Activated naive CD4-positive, alpha-beta T cell treated with anti-CD3 and anti-CD28 coated beads for 36 hours (primary cell): ENCODE measurements at regions of chr20 and their contacts with region 1.

Region 1: DNA sequence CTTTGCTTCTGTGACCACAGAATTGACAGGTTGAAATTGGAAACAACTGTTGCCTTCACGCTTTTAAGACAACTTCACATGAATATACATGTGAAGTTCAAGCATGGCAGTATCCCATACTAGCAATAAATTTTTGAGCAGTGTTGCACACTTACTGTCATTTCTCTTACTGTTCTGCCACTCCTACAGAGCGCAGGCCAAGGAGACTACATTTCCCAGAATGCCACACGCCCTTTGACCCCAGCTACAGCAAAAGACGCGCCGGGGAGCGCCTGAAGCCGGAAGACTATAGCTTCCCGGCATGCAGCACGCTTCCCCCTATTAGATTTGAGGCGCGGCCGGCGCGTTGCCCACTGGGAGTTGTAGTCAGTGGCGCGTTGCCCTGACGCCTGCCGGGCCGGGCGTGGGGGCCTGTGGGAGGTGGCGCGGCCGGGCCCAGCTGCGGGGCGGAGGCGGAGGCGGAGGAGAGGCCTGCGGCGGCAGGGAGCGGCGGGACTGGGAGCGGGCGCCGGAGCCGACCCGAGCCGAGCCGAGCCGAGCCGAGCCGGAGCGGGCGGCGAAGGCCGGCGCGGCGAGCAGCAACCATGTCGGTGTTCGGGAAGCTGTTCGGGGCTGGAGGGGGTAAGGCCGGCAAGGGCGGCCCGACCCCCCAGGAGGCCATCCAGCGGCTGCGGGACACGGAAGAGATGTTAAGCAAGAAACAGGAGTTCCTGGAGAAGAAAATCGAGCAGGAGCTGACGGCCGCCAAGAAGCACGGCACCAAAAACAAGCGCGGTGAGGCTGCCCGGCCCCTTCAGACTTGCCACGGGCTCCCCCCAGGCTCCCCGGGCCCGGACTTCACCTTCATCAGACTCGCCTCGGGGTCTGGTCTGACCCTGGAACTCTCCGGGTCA is at the start of gene CHMP4B:
- DNase-seq: peak; percentile 99
- H3K4me3 Mint-ChIP-seq: peak within 1 kb of the TSS; percentile 87
- H3K27ac Mint-ChIP-seq: peak within 1 kb of the TSS; percentile 87
- H3K4me1 Mint-ChIP-seq: peaks cover 42% of the 10 kb centered on the region
- H3K27me3 Mint-ChIP-seq: no peaks in the 10 kb centered on the region
- total RNA-seq, gene CHMP4B: 68.9 to 69.7 TPM

Region 2: DNA sequence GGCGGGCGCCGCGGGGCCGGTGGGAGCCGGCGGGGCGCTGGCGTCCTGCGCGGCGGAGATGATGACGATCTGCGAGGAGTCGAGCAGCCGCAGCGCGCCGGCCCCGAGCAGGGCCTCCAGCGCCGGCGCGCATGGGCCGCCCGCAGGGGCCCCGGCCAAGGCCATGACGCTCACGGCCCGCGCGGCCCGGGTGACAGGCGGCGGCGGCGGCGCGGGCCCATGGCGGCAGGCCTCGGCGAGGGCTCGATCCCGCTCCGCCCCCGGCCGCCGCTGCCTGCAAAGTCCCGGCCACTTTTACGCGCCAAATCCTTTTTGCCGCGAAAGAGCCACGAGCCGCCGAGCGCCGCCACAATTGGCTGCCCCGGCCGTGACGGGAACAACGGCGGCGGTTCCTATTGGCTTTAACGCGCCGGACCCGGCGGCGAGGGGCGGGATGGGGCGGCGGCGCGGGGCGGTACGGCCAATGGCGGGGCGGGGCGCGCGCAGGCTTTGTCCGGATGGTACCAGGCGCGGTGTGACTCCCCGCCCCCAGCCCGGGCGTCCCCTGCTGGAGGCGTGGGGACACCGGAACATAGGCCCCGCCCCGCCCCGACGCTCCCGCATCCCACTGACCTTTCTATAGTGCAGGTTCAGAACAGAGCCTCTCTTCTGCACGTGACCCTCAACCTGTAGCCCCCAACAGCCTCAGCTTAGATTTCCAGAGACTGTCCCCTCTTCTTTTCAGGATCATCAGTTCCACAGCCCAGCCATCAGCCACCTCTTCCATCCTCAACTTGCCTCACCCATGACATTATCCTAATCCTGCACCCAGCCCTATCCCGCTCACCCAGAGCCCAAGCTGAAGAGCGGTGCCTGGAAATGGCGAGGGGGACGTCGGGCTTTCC is 124.8 kb before region 1 on chr20 and contains the start of gene E2F1:
- CTCF ChIA-PET with region 1: no interaction called
- intact Hi-C with region 1: loop called (anchors 1 kb)
- DNase-seq: peak; percentile 97
- H3K4me3 Mint-ChIP-seq: peak within 1 kb of the TSS; percentile 87
- H3K27ac Mint-ChIP-seq: peak within 1 kb of the TSS; percentile 88
- H3K4me1 Mint-ChIP-seq: peaks cover 62% of the 10 kb centered on the region
- H3K27me3 Mint-ChIP-seq: no peaks in the 10 kb centered on the region
- total RNA-seq, gene E2F1: 69.3 to 70.0 TPM

Region 3: GRCh38 chr20:33777816-33778215 is 33.3 kb before region 1 on chr20:
- CTCF ChIA-PET with region 1: no interaction called
- intact Hi-C with region 1: loop called (anchors 1 kb)
- DNase-seq: no peak
- H3K4me3 Mint-ChIP-seq: no peak overlapping the region
- H3K27ac Mint-ChIP-seq: no peak overlapping the region
- H3K4me1 Mint-ChIP-seq: peaks cover 15% of the 10 kb centered on the region
- H3K27me3 Mint-ChIP-seq: no peaks in the 10 kb centered on the region

Region 4: DNA sequence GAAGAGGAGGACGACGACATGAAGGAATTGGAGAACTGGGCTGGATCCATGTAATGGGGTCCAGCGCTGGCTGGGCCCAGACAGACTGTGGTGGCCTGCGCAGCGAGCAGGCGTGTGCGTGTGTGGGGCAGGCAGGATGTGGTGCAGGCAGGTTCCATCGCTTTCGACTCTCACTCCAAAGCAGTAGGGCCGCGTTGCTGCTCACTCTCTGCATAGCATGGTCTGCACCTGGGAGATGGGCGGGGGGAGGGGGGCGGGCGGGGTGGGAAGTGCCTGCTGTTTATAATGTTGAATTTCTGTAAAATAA is 42.3 kb after region 1 on chr20:
- CTCF ChIA-PET with region 1: interaction called, 4 read pairs
- intact Hi-C with region 1: loop called (anchors 2 kb)
- DNase-seq: peak; percentile 56
- H3K4me3 Mint-ChIP-seq: no peak overlapping the region
- H3K27ac Mint-ChIP-seq: peak overlapping the region; percentile 64
- H3K4me1 Mint-ChIP-seq: peaks cover 48% of the 10 kb centered on the region
- H3K27me3 Mint-ChIP-seq: no peaks in the 10 kb centered on the region

Region 5: DNA sequence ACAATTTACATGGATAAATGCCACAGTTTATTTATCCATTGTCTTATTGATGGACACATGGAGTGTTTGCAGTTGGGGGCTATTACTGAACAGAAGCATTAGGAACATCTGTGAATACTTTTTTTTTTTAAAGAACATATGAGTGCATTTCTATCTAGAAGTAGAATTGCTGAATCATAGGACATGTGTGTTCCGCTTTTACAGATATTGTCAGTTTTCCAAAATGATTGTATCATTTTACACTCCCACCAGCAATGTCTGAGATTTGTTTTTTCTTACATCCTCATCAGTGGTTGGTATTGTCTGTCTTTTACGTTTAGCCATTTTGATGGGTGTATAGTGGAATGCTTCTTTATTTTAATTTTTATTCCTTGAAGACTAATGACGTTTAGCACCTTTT is 388.1 kb after region 1 on chr20:
- CTCF ChIA-PET with region 1: no interaction called
- intact Hi-C with region 1: no loop called
- DNase-seq: no peak
- H3K4me3 Mint-ChIP-seq: no peak overlapping the region
- H3K27ac Mint-ChIP-seq: no peak overlapping the region
- H3K4me1 Mint-ChIP-seq: no peaks in the 10 kb centered on the region
- H3K27me3 Mint-ChIP-seq: peaks cover 2% of the 10 kb centered on the region

Region 6: DNA sequence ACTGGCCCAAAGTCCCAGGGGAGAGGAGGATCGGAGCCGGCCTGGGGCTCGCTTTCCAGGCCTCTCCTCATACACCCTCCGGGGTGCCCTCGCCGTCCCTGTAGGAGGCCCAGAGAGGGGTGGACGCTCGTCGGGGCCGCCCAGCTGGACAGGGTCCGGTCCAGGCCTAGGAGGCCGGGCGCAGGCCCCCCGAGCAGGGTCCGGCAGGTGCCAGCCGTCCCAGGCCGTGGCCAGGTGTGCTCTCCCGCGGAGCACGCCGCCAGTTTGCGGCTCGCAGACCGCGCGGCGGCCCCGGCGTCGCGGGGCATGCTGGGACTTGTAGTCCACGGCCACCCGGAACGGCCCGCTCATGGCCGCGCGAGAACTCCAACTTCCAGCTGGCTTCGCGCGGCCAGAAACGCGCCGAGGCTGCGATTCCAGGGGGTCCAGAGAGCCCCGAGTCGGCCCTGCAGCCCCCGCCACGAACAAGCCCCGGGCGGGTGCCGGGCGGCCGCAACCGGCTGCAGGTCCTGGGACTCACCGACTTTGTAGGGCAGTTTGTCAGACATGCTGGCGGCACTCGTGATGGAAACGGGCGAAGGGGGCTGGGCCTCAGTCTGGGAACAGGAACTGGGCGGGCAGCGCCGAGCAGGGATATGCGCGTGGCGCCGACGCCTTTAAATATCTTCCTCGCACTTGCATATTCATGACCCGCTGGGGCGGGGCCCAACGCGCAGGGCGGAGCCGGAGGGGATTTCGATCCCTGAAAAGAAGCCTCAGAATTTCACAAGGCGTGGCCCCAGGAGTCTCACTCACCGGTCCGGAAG is 491.8 kb after region 1 on chr20 and contains the start of gene AHCY:
- CTCF ChIA-PET with region 1: no interaction called
- intact Hi-C with region 1: loop called (anchors 1 kb)
- DNase-seq: peak; percentile 95
- H3K4me3 Mint-ChIP-seq: peak within 1 kb of the TSS; percentile 84
- H3K27ac Mint-ChIP-seq: peak within 1 kb of the TSS; percentile 86
- H3K4me1 Mint-ChIP-seq: peaks cover 4% of the 10 kb centered on the region
- H3K27me3 Mint-ChIP-seq: no peaks in the 10 kb centered on the region
- total RNA-seq, gene AHCY: 258 to 261 TPM